BJ (cell line): ENCODE measurements at regions of chr6 and their contacts with region 1.

Region 1: GRCh38 chr6:131914967-131915751 is 36.0 kb downstream of the CCN2 start:
- DNase-seq: no peak
- H3K4me3 ChIP-seq: no peak overlapping the region
- H3K27me3 ChIP-seq: no peaks in the 10 kb centered on the region
- CTCF ChIP-seq: peak; percentile 86

Region 2: GRCh38 chr6:131694831-131695426 is 220.2 kb before region 1 on chr6:
- CTCF ChIA-PET with region 1: interaction called, 144 read pairs
- POLR2A ChIA-PET with region 1: no interaction called
- DNase-seq: peak; percentile 18
- H3K4me3 ChIP-seq: no peak overlapping the region
- H3K27me3 ChIP-seq: no peaks in the 10 kb centered on the region
- CTCF ChIP-seq: peak; percentile 93

Region 3: DNA sequence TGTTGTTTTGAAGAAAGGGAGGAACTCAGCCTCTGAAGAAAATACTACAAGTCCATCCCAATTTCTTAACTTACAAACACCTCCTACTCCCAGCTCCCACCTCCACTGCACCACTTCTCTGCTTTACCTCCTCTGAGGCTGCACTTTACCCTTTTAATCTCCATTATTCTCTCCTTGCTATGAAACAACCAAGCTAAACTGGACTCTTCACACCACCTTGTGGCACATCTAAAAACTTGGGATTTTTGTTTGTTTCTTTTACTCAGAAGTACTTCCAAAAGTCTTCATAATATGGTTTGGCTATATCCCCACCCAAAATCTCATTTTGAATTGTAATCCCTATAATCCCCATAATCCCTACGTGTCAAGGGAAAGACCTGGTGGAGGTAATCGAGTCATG is 343.9 kb after region 1 on chr6:
- CTCF ChIA-PET with region 1: interaction called, 79 read pairs
- POLR2A ChIA-PET with region 1: no interaction called
- DNase-seq: no peak
- H3K4me3 ChIP-seq: no peak overlapping the region
- H3K27me3 ChIP-seq: no peaks in the 10 kb centered on the region
- CTCF ChIP-seq: peak; percentile 49

Region 4: DNA sequence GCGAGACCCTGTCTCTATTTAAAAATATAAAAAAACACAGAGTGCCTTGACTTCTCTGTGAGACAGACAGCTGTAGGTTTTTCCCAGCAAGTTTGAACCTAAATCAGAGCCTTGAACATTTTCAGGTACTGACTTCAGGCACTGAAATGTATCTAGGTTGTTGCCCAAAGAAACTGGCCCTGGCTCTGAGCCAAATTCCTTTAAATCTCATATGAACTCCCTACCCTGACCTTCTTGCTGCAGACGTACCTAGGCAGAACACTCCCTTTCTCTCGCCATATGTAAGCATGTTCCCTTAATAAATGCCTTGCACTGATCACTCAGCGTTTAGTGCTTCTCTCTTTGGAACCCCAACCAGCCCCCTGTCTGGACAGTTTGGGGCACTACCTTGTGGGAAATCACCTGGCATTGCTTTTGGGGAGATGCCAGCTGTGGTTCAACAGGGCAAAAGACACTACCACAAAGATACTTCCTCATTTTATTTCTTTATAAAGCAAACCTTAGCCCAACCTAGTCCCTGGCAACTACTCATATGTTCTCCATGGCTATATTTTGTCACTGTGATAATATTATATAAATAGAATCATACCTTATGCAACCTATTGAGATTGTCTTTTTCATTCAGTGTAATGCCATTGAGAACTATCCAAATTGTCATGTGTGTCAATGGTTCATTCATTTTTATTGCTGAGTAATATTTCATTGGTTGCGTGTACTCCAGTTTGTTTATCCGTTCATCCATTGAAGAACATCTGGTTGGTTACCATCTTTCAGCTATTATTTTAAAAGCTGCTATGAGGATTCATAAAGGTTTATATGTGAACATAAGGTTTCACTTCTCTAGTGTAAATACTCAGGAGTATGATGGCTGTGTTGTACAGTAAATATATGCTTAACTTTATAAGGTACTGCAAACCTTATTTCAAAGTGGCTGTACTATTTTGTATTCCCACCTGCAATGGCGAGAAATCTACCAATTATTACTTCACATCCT is 371.2 kb after region 1 on chr6:
- CTCF ChIA-PET with region 1: interaction called, 28 read pairs
- POLR2A ChIA-PET with region 1: no interaction called
- DNase-seq: no peak
- H3K4me3 ChIP-seq: no peak overlapping the region
- H3K27me3 ChIP-seq: no peaks in the 10 kb centered on the region; the same call in 1 of the 2 replicates
- CTCF ChIP-seq: no peak

Region 5: GRCh38 chr6:132483779-132484679 is 568.9 kb after region 1 on chr6:
- CTCF ChIA-PET with region 1: interaction called, 12 read pairs
- POLR2A ChIA-PET with region 1: no interaction called
- DNase-seq: no peak
- H3K4me3 ChIP-seq: no peak overlapping the region
- H3K27me3 ChIP-seq: no peaks in the 10 kb centered on the region
- CTCF ChIP-seq: peak; percentile 57